ENCODE measurements at regions of chr20 and their contacts with region 1.

Region 1: GRCh38 chr20:3239026-3239866 is at the start of gene SLC4A11:
- DNase-seq: peak; percentile 73
- H3K4me3 Mint-ChIP-seq: peak within 1 kb of the TSS; percentile 86
- H3K27ac Mint-ChIP-seq: no peak within 1 kb of the TSS
- H3K4me1 Mint-ChIP-seq: peaks cover 35% of the 10 kb centered on the region
- H3K27me3 Mint-ChIP-seq: no peaks in the 10 kb centered on the region
- CTCF ChIP-seq: no peak
- total RNA-seq, gene SLC4A11: 4.1 and 5.7 TPM in 2 replicates

Region 2: GRCh38 chr20:3209257-3209945 is 29.8 kb before region 1 on chr20 and contains the start of gene ITPA:
- CTCF ChIA-PET with region 1: no interaction called
- POLR2A ChIA-PET with region 1: interaction called, 35 read pairs
- intact Hi-C with region 1: no loop called
- DNase-seq: peak; percentile 49
- H3K4me3 Mint-ChIP-seq: peak within 1 kb of the TSS; percentile 100
- H3K27ac Mint-ChIP-seq: peak within 1 kb of the TSS; percentile 99
- H3K4me1 Mint-ChIP-seq: no peaks in the 10 kb centered on the region
- H3K27me3 Mint-ChIP-seq: no peaks in the 10 kb centered on the region
- CTCF ChIP-seq: no peak
- total RNA-seq, gene ITPA: 69.4 and 97.1 TPM in 2 replicates

Region 3: GRCh38 chr20:3250091-3250504 is 10.9 kb after region 1 on chr20:
- CTCF ChIA-PET with region 1: interaction called, 4 read pairs
- POLR2A ChIA-PET with region 1: interaction called, 12 read pairs
- intact Hi-C with region 1: no loop called
- DNase-seq: peak; percentile 34
- H3K4me3 Mint-ChIP-seq: no peak overlapping the region
- H3K27ac Mint-ChIP-seq: no peak overlapping the region
- H3K4me1 Mint-ChIP-seq: no peaks in the 10 kb centered on the region
- H3K27me3 Mint-ChIP-seq: no peaks in the 10 kb centered on the region
- CTCF ChIP-seq: no peak

Region 4: DNA sequence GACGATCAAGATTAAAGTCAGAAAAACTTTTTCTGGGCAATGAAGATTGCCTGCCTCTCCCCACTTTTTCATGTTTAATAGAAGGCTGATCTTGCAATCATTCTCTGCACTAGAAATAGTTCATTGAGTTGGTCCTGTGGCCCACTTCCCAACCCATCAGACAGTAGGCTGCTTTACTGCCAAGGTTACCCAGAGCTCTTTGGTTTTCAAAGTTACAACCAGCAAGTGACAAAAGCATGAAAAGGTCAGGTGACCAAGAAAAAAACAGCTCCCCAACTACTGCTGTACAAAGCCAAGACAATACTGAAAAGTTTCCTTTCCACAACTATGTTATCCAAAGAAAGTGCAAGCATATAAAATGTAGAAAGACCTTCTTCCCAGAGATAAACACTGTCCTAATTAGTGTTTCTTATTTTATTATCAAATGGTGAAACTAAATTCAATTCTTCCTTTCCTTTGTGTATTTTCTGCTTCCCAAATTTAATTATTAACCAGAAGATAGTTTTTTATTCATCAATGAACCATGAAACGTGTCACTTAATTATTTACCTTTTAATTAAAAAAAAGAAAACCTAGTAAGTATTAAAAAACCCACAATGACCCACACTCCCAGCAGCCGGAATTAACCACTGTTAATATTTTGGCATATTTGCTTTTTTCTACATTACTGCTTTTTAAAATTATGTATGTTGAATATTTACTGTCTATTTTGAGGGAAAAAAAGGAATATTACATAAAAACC is 151.7 kb after region 1 on chr20:
- CTCF ChIA-PET with region 1: no interaction called
- POLR2A ChIA-PET with region 1: no interaction called
- intact Hi-C with region 1: no loop called
- DNase-seq: no peak
- H3K4me3 Mint-ChIP-seq: no peak overlapping the region
- H3K27ac Mint-ChIP-seq: no peak overlapping the region
- H3K4me1 Mint-ChIP-seq: no peaks in the 10 kb centered on the region
- H3K27me3 Mint-ChIP-seq: no peaks in the 10 kb centered on the region
- CTCF ChIP-seq: no peak

Measured in MCF 10A (cell line).